A549 (cell line): ENCODE measurements at regions of chr11 and their contacts with region 1.

Region 1: GRCh38 chr11:68297812-68298658 is 14.4 kb upstream of the LRP5 start:
- DNase-seq: peak; percentile 81 to 82
- ATAC-seq: peak; percentile 87 to 95
- H3K4me3 ChIP-seq: peak overlapping the region; percentile 27; the same call in 2 of the 3 replicates
- H3K27ac ChIP-seq: peak overlapping the region; percentile 81 to 82
- H3K4me1 ChIP-seq: peaks cover 29% of the 10 kb centered on the region
- CTCF ChIP-seq: peak; percentile 97
- EP300 ChIP-seq: no peak
- POLR2A ChIP-seq: no peak
- RAD21 ChIP-seq: peak; percentile 89 to 96

Region 2: DNA sequence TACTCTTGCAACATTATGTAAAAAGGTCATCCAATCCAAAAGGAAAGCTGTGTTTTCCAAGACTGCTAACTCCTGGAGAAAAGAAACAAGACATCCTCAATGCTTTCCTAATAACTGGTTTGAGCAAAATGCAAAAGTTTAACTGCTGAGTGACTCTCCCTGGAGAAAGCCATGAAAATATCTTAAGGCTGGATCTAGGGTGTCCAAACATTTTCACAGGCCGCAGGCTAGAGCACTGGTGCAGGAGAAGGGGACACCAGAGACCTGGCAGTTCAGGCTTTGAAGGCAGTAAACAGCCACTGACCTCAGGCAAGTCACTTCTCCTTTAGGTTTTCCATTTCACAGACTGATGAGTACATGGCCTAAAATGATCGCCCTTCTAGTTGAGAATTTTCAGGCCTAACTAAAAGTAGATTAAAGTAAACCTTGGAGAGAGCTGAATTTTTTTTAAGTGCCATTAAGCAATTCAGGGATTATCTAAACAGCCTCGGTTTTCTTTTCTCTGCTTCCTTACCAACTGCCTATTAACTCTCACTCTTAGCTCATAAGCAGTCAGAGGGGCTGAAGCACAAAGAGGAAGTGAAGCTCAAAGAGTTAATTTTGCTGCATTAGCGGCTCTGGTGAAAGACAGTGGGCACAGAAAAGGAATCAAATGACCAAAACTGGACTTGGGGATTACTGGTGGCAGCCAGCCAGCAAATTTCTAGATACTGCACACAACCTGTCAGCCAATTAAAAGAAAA is 179.2 kb before region 1 on chr11:
- CTCF ChIA-PET with region 1: no interaction called
- POLR2A ChIA-PET with region 1: no interaction called
- DNase-seq: no peak
- ATAC-seq: no peak
- H3K4me3 ChIP-seq: no peak overlapping the region
- H3K27ac ChIP-seq: no peak overlapping the region
- H3K4me1 ChIP-seq: peaks cover 37% of the 10 kb centered on the region
- CTCF ChIP-seq: no peak
- EP300 ChIP-seq: no peak
- POLR2A ChIP-seq: no peak
- RAD21 ChIP-seq: no peak

Region 3: GRCh38 chr11:68213555-68214174 is 84.4 kb before region 1 on chr11:
- CTCF ChIA-PET with region 1: interaction called, 41 read pairs
- POLR2A ChIA-PET with region 1: no interaction called
- DNase-seq: peak; percentile 66 to 98
- ATAC-seq: peak; percentile 52 to 62
- H3K4me3 ChIP-seq: peak overlapping the region; percentile 91
- H3K27ac ChIP-seq: peak overlapping the region; percentile 100
- H3K4me1 ChIP-seq: peaks cover 23% of the 10 kb centered on the region
- CTCF ChIP-seq: no peak
- EP300 ChIP-seq: no peak
- POLR2A ChIP-seq: peak; percentile 98
- RAD21 ChIP-seq: no peak

Region 4: GRCh38 chr11:68257475-68258362 is 40.3 kb before region 1 on chr11:
- CTCF ChIA-PET with region 1: interaction called, 131 read pairs
- POLR2A ChIA-PET with region 1: no interaction called
- DNase-seq: peak; percentile 84 to 92
- ATAC-seq: peak; percentile 77 to 90
- H3K4me3 ChIP-seq: no peak overlapping the region
- H3K27ac ChIP-seq: peak overlapping the region; percentile 54 to 64; a peak in 5 of 6 replicates
- H3K4me1 ChIP-seq: peaks cover 15% of the 10 kb centered on the region
- CTCF ChIP-seq: peak; percentile 88
- EP300 ChIP-seq: no peak
- POLR2A ChIP-seq: no peak
- RAD21 ChIP-seq: peak; percentile 93 to 95

Region 5: GRCh38 chr11:68282141-68282970 is 15.7 kb before region 1 on chr11:
- CTCF ChIA-PET with region 1: interaction called, 78 read pairs
- POLR2A ChIA-PET with region 1: no interaction called
- DNase-seq: no peak
- ATAC-seq: no peak; a peak in 1 of 6 replicates
- H3K4me3 ChIP-seq: no peak overlapping the region
- H3K27ac ChIP-seq: no peak overlapping the region
- H3K4me1 ChIP-seq: no peaks in the 10 kb centered on the region
- CTCF ChIP-seq: no peak
- EP300 ChIP-seq: no peak
- POLR2A ChIP-seq: no peak
- RAD21 ChIP-seq: no peak

Region 6: GRCh38 chr11:68331338-68331947 is 33.4 kb after region 1 on chr11:
- CTCF ChIA-PET with region 1: interaction called, 13 read pairs
- POLR2A ChIA-PET with region 1: no interaction called
- DNase-seq: no peak
- ATAC-seq: no peak
- H3K4me3 ChIP-seq: no peak overlapping the region
- H3K27ac ChIP-seq: peak overlapping the region in 1 of 2 experiments; percentile 26; a peak in 1 of 6 replicates
- H3K4me1 ChIP-seq: peaks cover 11% of the 10 kb centered on the region; the same call in 2 of the 3 replicates
- CTCF ChIP-seq: no peak
- EP300 ChIP-seq: no peak
- POLR2A ChIP-seq: no peak
- RAD21 ChIP-seq: no peak

Region 7: DNA sequence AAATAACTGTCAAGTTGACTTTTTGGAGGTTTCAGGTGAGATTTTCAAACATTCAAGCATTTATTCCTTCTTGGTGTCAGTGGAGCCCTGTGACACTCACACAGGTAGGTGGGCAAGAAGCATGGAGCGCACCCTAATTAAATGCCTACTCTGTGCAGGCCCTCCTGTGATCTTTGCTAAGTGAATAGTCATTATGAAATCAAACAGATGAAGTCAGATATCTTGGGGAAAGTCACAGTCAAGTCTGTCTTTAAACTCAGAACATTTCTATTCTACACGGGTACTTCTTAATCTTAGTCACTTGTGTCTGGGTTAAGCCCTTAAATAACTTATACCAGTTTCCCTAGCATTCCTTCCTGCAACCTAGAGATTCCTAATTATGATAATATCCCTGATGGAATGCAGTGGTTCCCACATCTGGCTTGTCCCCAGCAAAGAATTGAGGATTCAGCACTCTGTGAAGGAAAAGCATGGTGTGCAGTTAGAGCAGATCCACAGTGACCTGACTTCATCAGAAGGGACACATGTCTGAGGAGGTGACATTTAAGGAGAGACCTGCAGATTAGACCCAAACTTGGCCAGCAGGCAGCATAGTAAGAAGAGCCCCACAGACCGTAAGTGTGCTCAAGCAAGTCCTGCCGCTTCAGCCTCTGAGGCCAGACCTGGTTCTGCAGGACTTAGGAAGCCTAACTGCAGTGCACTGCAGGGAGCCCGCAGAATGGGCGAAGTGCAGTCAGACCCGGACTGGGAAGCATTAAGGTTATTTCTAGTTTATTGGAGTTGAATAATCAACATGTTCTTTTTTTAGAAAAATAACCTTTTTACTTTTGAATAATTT is 301.0 kb after region 1 on chr11:
- CTCF ChIA-PET with region 1: no interaction called
- POLR2A ChIA-PET with region 1: no interaction called
- DNase-seq: no peak
- ATAC-seq: 0 out of 6 replicates have a peak, but pooled peaks of 1 of the 2 experiments have one; percentile 33
- H3K4me3 ChIP-seq: no peak overlapping the region
- H3K27ac ChIP-seq: no peak overlapping the region
- H3K4me1 ChIP-seq: no peaks in the 10 kb centered on the region
- CTCF ChIP-seq: no peak
- EP300 ChIP-seq: no peak
- POLR2A ChIP-seq: no peak
- RAD21 ChIP-seq: no peak